Left colon (tissue), 2 donors: ENCODE measurements at regions of chr7 and their contacts with region 1.

Region 1: GRCh38 chr7:137454246-137454724 is 110.8 kb upstream of the PTN start:
- DNase-seq: no peak
- ATAC-seq: no peak

Region 2: GRCh38 chr7:136405931-136406777 is 1048.1 kb before region 1 on chr7:
- intact Hi-C with region 1: loop called in 1 of 2 experiments (anchors 10 kb)
- DNase-seq: no peak
- ATAC-seq: peak; percentile 42

Region 3: GRCh38 chr7:137169282-137169698 is 285.0 kb before region 1 on chr7:
- intact Hi-C with region 1: loop called in 1 of 2 experiments (anchors 10 kb)
- DNase-seq: peak; percentile 33 to 41
- ATAC-seq: peak; percentile 76

Region 4: DNA sequence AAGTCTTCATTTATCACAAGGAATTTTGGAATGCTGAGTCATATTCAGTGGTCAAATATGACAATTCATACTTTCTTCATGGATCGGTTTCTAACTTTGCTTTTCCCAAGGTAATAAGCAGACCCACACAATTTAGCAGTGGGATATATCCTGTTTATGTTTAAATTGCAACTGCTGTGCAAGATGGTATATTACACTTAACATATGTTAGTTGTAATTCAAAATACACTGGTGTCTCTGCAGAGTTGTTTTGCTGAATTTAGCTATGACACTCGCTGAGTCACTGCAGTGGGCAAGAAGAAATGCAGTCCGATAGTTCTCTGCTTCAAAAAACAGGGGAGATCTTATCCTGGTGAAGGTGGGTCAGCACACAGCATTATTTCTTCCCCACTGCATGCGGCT is 84.1 kb after region 1 on chr7:
- intact Hi-C with region 1: no loop called
- DNase-seq: no peak
- ATAC-seq: no peak